HEK293 (cell line): ENCODE measurements at regions of chr7 and their contacts with region 1.

Region 1: GRCh38 chr7:139645572-139646523 is 122.4 kb downstream of the CLEC2L start:
- H3K4me3 ChIP-seq: no peak overlapping the region
- H3K27ac ChIP-seq: no peak overlapping the region
- H3K4me1 ChIP-seq: no peaks in the 10 kb centered on the region
- CTCF ChIP-seq: peak; percentile 81

Region 2: DNA sequence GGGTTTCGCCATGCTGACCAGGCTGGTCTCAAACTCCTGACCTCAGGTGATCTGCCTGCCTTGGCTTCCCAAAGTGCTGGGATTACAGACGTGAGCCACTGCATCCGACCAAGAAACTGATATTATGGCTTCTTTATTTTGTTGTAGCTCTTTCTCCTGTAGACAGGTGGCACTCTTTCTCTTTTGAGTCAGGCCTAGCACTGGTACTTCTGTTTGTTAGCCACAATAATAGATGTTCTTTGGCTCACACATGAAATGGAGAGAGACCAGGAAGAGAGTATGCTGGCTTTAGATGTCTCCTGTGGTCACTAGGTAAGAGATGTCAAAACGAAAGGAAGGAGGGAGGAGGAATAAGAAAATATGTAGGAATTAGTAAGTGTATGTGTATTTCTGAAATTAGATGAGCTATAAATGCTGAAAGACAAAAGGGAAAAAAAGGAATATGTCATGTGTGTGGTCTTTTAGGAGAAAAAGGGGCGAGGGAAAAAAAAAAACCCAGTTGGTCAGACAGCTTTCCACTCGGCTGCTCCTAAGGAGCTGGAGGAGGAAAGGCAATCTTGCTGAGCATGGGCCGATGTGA is 43.6 kb before region 1 on chr7:
- CTCF ChIA-PET with region 1: interaction called, 12 read pairs
- POLR2A ChIA-PET with region 1: interaction called, 4 read pairs
- H3K4me3 ChIP-seq: no peak overlapping the region
- H3K27ac ChIP-seq: no peak overlapping the region
- H3K4me1 ChIP-seq: no peaks in the 10 kb centered on the region
- CTCF ChIP-seq: 0 out of 2 replicates have a peak, but pooled peaks have one; percentile 31

Region 3: GRCh38 chr7:139620676-139621344 is 25.0 kb before region 1 on chr7:
- CTCF ChIA-PET with region 1: interaction called, 15 read pairs
- POLR2A ChIA-PET with region 1: no interaction called
- H3K4me3 ChIP-seq: no peak overlapping the region
- H3K27ac ChIP-seq: no peak overlapping the region
- H3K4me1 ChIP-seq: no peaks in the 10 kb centered on the region
- CTCF ChIP-seq: peak; percentile 71

Region 4: DNA sequence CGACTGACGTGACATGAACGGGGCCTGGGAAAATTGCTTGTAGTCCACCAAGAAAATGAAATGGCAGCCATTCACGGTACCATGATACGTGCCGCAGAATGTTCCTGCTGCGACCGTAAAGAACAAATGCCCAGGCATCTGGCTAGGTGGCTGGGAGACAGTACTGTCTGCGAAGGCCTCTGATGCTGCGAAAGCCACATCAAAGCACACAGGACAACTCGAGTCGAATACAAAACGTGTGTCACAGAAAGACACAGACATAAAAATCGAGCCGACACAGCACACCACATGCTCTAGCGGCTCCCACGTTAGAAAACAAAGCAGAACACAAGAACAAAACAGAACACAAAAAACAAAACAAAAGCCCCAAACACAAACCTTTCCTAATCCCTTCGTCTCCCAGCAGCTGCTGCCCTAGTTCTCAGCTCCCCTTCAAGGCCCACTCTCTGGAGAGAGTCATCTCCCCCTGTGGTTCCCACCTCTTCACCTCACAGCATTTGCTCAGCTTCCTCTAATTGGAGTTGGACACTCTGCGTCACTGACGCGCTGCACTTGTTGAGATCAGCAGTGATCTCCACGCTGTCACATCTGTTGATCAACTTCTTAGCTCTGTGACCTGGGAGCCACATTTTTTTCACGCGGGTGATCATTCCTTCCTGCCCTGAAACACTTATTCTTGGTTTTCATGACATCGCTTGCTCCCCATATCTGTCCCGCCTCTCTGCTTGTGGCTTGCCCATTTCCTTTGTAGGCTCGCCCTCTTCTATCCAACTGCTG is 10.1 kb before region 1 on chr7:
- CTCF ChIA-PET with region 1: interaction called, 23 read pairs
- POLR2A ChIA-PET with region 1: no interaction called
- H3K4me3 ChIP-seq: no peak overlapping the region
- H3K27ac ChIP-seq: no peak overlapping the region
- H3K4me1 ChIP-seq: no peaks in the 10 kb centered on the region
- CTCF ChIP-seq: no peak

Region 5: DNA sequence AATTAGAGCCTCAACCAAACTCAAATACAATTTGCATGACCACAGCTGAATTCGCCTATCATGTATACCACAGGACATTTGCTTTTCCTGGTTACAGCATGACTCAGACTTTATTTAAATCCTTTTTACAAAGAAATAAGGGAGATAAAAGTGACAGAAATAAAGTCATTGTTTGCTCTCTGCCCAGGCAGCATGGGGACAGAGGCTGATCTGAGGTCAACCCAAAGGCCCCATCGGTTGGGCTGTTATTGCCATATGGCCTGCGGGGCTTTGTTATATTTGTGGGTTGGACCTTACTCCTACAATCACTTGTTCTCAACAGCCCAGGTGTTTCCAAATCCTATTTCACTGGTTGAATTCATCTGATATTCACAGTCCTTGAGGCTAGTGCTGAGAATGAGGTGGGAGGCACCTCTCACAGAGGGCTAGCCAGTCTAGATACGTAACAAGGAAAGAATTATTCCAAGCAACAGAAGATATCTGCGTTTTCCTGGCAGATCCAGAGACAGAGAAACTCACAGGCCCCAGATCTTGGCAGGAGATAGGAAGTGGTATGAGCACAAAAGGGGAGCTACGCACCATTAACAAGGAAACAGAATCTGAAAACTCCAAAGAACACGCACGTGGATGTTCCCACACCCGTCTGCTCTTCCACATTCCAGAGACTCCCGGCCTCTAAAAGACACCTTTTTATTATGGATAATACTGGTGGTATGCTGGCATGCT is 14.6 kb after region 1 on chr7:
- CTCF ChIA-PET with region 1: interaction called, 26 read pairs
- POLR2A ChIA-PET with region 1: no interaction called
- H3K4me3 ChIP-seq: no peak overlapping the region
- H3K27ac ChIP-seq: no peak overlapping the region
- H3K4me1 ChIP-seq: no peaks in the 10 kb centered on the region
- CTCF ChIP-seq: no peak

Region 6: GRCh38 chr7:140003913-140004382 is 358.1 kb after region 1 on chr7:
- CTCF ChIA-PET with region 1: interaction called, 62 read pairs
- POLR2A ChIA-PET with region 1: no interaction called
- H3K4me3 ChIP-seq: no peak overlapping the region
- H3K27ac ChIP-seq: no peak overlapping the region
- H3K4me1 ChIP-seq: no peaks in the 10 kb centered on the region
- CTCF ChIP-seq: 0 out of 2 replicates have a peak, but pooled peaks have one; percentile 17